CD4-positive, alpha-beta memory T cell (primary cell): ENCODE measurements at regions of chr9 and their contacts with region 1.

Region 1: DNA sequence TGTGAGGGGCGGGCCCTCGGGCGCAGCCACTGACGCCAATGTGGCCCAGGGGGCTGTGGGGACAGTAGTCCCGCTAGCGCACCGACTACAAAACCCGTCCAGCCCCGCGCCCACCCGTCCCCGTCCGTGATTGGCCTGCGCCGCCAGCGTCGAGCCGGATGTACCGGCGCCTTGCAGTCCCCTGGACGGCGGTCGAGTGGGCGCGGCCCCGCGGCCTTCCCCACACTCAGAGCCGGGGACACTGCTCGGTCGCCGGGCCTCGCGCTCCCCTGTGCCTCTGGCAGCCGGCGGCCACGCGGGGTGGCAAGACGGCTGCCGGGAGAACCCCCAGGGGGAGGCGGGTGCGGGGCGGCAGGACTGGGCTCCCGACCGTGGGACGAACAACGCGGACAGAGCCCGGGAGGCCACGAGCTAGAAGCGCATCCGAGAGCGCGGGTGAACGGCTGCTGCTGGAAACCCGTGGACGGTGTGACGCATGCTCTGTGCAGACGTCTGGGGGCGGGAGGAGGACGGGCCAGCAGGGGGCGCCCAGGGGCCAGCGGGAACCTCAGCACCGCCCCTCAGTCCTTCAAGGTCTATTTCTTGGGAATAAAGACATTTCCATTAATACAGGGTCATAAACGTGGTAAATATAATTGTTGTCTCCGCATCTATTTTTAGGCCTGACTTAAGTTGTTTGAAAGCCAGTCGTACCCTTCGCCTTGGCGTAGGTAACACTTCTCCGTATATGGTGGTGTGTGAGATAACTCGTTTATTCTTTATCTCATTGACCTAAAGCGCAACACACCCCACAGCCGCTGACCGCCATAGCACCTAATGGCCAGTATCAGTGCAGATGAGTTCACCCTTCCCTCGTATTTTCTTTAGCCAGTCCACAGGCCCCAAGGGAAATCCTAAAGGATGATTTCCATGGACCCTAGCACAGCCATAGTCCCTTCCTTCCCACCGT is 629 bp upstream of the BICD2 start:
- DNase-seq: peak; percentile 97 to 99 (median 99)
- H3K4me3 ChIP-seq: peak overlapping the region; percentile 2 to 80
- H3K4me3 Mint-ChIP-seq: peak overlapping the region; percentile 89 to 95 (median 90)
- H3K27ac ChIP-seq: peak overlapping the region; percentile 95
- H3K27ac Mint-ChIP-seq: peak overlapping the region; percentile 94 to 98 (median 96)
- H3K4me1 ChIP-seq: peaks cover 54% of the 10 kb centered on the region
- H3K4me1 Mint-ChIP-seq: peaks cover 43 to 66% (median 49%) of the 10 kb centered on the region in 4 donors
- H3K27me3 ChIP-seq: no peaks in the 10 kb centered on the region
- H3K27me3 Mint-ChIP-seq: no peaks in the 10 kb centered on the region

Region 2: DNA sequence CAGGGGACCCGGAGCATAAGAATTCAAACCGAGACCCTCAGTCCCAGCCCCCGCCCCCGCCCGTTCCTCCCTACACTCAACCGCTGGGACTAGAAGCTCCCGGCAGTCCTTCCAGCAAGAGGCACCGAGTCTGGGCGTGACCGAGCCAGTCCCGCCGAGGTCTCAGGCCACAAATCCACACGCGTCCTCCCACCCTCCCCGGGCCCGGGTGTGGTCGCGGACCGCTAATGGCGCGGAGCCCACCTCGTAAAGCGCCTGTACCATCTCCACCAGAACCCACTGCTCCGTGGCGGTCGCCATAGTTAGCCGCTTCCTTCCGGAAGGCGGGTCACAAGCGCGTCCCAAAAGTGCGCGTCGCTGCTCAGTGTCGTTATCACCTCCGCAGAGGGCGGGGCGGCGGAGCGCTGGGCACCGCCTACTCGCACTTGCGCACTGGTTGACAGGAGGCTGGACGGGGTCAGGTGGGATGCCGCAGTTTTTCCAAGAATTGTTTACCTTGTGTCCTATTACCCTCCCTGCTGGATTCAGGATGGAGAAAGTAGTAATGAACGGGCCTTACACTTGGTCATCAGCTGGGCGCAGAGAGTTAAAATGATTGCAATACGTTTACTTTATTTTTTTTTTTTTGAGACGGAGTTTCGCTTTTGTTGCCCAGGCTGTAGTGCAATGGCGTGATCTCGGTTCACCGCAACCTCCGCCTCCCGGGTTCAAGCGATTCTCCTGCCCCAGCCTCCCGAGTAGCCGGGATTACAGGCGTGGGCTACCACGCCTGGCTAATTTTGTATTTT is 650.0 kb before region 1 on chr9 and contains the start of gene SPTLC1:
- CTCF ChIA-PET with region 1: no interaction called
- POLR2A ChIA-PET with region 1: interaction called, 3 read pairs
- intact Hi-C with region 1: loop called (anchors 1 kb)
- DNase-seq: peak; percentile 90 to 95 (median 94)
- H3K4me3 ChIP-seq: peak within 1 kb of the TSS; percentile 66 to 90
- H3K4me3 Mint-ChIP-seq: peak within 1 kb of the TSS; percentile 97 to 99 (median 99)
- H3K27ac ChIP-seq: peak within 1 kb of the TSS; percentile 89
- H3K27ac Mint-ChIP-seq: peak within 1 kb of the TSS; percentile 96 to 100 (median 99)
- H3K4me1 ChIP-seq: peaks cover 26% of the 10 kb centered on the region
- H3K4me1 Mint-ChIP-seq: peaks cover 26 to 48% (median 34%) of the 10 kb centered on the region in 4 donors
- H3K27me3 ChIP-seq: no peaks in the 10 kb centered on the region
- H3K27me3 Mint-ChIP-seq: no peaks in the 10 kb centered on the region
- total RNA-seq, gene SPTLC1: 56.8 to 57.9 TPM

Region 3: GRCh38 chr9:92325269-92325990 is 439.8 kb before region 1 on chr9 and contains the starts of genes CENPP and NOL8:
- CTCF ChIA-PET with region 1: no interaction called
- POLR2A ChIA-PET with region 1: interaction called, 4 read pairs
- intact Hi-C with region 1: loop called (anchors 2 kb)
- DNase-seq: peak; percentile 89 to 91 (median 91)
- H3K4me3 ChIP-seq: peak within 1 kb of the TSS; percentile 97 to 100
- H3K4me3 Mint-ChIP-seq: peak within 1 kb of the TSS; percentile 95 to 99 (median 98)
- H3K27ac ChIP-seq: peak within 1 kb of the TSS; percentile 92
- H3K27ac Mint-ChIP-seq: peak within 1 kb of the TSS; percentile 91 to 100 (median 99)
- H3K4me1 ChIP-seq: peaks cover 26% of the 10 kb centered on the region
- H3K4me1 Mint-ChIP-seq: peaks cover 8 to 41% (median 30%) of the 10 kb centered on the region in 4 donors
- H3K27me3 ChIP-seq: no peaks in the 10 kb centered on the region
- H3K27me3 Mint-ChIP-seq: no peaks in the 10 kb centered on the region
- total RNA-seq, gene CENPP: 0.55 to 4.3 TPM
- total RNA-seq, gene NOL8: 93.9 to 104 TPM

Region 4: GRCh38 chr9:92716557-92716956 is 48.7 kb before region 1 on chr9:
- CTCF ChIA-PET with region 1: interaction called, 4 read pairs
- POLR2A ChIA-PET with region 1: interaction called, 7 read pairs
- intact Hi-C with region 1: loop called (anchors 2 kb)
- DNase-seq: peak; percentile 60 to 76 (median 72)
- H3K4me3 ChIP-seq: no peak overlapping the region
- H3K4me3 Mint-ChIP-seq: no peak overlapping the region
- H3K27ac ChIP-seq: no peak overlapping the region
- H3K27ac Mint-ChIP-seq: peak overlapping the region; percentile 15 to 74 (median 48)
- H3K4me1 ChIP-seq: peaks cover 19% of the 10 kb centered on the region
- H3K4me1 Mint-ChIP-seq: peaks cover 15 to 29% (median 17%) of the 10 kb centered on the region in 4 donors
- H3K27me3 ChIP-seq: no peaks in the 10 kb centered on the region
- H3K27me3 Mint-ChIP-seq: no peaks in the 10 kb centered on the region

Region 5: DNA sequence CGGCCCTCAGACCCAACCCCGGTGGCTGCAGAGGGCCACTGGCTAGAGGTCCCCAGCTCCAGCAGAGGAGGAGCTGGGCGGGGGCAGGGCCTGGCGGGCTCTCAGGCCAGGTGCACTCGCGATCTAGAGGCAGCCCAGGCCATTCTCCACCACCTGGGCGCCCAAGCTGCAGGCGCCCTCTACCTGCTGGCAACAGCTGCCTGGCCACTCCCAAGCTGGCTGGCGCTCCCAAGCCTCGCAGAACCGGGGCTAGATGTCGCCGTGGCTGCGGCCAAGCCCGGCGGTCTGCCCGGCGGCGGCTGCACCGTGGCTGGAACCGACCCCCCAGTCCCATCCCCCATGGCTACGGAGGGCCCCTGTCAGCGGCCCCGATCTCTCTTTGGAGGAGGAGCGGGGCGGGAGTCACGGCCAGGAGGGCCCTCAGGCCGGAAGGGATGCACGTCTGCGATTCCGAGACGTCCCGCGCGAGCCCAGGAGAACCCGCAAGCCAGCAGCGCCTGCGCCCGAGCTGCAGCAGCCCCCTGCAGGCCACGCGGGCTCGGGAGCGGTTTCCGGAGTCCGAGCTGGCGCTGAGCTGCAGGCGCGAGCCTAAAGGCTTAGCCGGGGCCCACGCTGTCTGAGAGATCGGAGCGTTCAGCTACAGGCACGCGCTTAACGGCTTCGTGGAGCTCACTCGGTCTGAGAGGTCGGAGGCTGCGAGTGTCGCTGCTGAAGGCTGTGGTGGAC is 43.6 kb after region 1 on chr9:
- CTCF ChIA-PET with region 1: interaction called, 3 read pairs
- POLR2A ChIA-PET with region 1: no interaction called
- intact Hi-C with region 1: loop called (anchors 1 kb)
- DNase-seq: peak; percentile 39 to 50 (median 47)
- H3K4me3 ChIP-seq: peak overlapping the region in 1 of 2 donors; percentile 47
- H3K4me3 Mint-ChIP-seq: peak overlapping the region; percentile 84 to 98 (median 86)
- H3K27ac ChIP-seq: no peak overlapping the region
- H3K27ac Mint-ChIP-seq: peak overlapping the region in 2 of 7 donors; percentile 43 to 73
- H3K4me1 ChIP-seq: peaks cover 31% of the 10 kb centered on the region
- H3K4me1 Mint-ChIP-seq: peaks cover 6 to 20% (median 13%) of the 10 kb centered on the region in 4 donors
- H3K27me3 ChIP-seq: peaks cover 46% of the 10 kb centered on the region
- H3K27me3 Mint-ChIP-seq: peaks cover 36 to 41% of the 10 kb centered on the region in 2 donors

Region 6: GRCh38 chr9:93566408-93567270 is 801.4 kb after region 1 on chr9:
- CTCF ChIA-PET with region 1: no interaction called
- POLR2A ChIA-PET with region 1: interaction called, 6 read pairs
- intact Hi-C with region 1: loop called (anchors 1 kb)
- DNase-seq: peak; percentile 95 to 99 (median 98)
- H3K4me3 ChIP-seq: peak overlapping the region; percentile 30 to 65
- H3K4me3 Mint-ChIP-seq: peak overlapping the region; percentile 79 to 89 (median 83)
- H3K27ac ChIP-seq: peak overlapping the region; percentile 90
- H3K27ac Mint-ChIP-seq: peak overlapping the region; percentile 87 to 97 (median 93)
- H3K4me1 ChIP-seq: peaks cover 25% of the 10 kb centered on the region
- H3K4me1 Mint-ChIP-seq: peaks cover 9 to 29% (median 21%) of the 10 kb centered on the region in 4 donors
- H3K27me3 ChIP-seq: no peaks in the 10 kb centered on the region
- H3K27me3 Mint-ChIP-seq: no peaks in the 10 kb centered on the region

Region 7: DNA sequence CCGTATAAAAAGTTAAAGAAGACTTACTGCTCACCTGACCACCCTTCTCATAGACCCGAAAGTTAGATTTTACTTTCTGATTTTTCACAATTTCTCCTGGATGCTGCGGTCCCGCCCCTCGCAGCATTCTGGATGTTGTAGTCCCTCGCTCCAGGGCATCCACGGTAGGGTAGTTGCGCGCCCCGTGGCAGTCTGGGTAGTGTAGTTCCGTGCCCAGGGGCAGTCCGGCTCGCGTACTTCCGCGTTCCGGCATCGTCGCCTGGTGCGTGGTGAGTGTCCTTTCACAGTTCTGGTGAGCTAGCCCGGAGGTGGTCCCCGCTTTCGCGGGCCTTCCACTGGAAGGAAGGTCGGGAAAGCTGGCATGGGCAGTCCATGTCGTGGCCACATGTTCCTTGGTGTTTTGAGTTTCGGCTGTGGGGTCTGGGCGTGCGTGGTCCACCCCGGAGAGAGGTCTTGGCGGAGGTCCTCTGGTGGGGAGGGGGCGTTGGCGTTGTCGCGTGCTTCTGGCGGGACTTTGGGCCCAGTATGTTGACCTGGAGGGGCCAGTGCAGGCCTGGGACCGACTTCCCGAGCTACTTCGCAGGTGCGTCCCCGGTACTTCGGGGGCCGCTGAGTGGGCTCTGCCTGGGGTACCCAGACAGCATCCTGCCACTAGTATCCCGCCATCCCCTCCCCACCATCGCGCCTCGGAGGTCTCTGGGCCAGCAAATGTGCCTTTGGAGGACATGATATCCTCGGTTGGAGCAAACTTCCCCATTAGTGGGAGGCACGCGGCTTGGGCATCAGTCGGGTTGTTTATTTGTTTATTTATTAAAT is 1494.0 kb after region 1 on chr9 and contains the start of gene ZNF169:
- CTCF ChIA-PET with region 1: no interaction called
- POLR2A ChIA-PET with region 1: no interaction called
- intact Hi-C with region 1: loop called (anchors 10 kb)
- DNase-seq: peak; percentile 78 to 88 (median 80)
- H3K4me3 ChIP-seq: peak within 1 kb of the TSS; percentile 85 to 99
- H3K4me3 Mint-ChIP-seq: peak within 1 kb of the TSS; percentile 96 to 100 (median 98)
- H3K27ac ChIP-seq: peak within 1 kb of the TSS; percentile 66
- H3K27ac Mint-ChIP-seq: peak within 1 kb of the TSS; percentile 88 to 99 (median 98)
- H3K4me1 ChIP-seq: peaks cover 19% of the 10 kb centered on the region
- H3K4me1 Mint-ChIP-seq: peaks cover 26 to 45% (median 36%) of the 10 kb centered on the region in 4 donors
- H3K27me3 ChIP-seq: no peaks in the 10 kb centered on the region
- H3K27me3 Mint-ChIP-seq: peaks cover 2 to 7% of the 10 kb centered on the region in 2 donors
- total RNA-seq, gene ZNF169: 22.3 to 25.2 TPM